A549 (cell line): ENCODE measurements at regions of chr19 and their contacts with region 1.

Region 1: GRCh38 chr19:41541990-41542584 is 33.9 kb upstream of the CEACAM21 start:
- DNase-seq: peak; percentile 69 to 73
- ATAC-seq: peak; percentile 44 to 69; a peak in 4 of 6 replicates
- H3K4me3 ChIP-seq: no peak overlapping the region
- H3K27ac ChIP-seq: no peak overlapping the region
- H3K4me1 ChIP-seq: no peaks in the 10 kb centered on the region
- CTCF ChIP-seq: peak; percentile 88
- EP300 ChIP-seq: no peak
- POLR2A ChIP-seq: no peak
- RAD21 ChIP-seq: peak; percentile 33 to 54; a peak in 4 of 5 replicates

Region 2: GRCh38 chr19:41531438-41532311 is 10.4 kb before region 1 on chr19:
- CTCF ChIA-PET with region 1: interaction called, 18 read pairs
- POLR2A ChIA-PET with region 1: no interaction called
- DNase-seq: peak; percentile 85
- ATAC-seq: peak; percentile 73 to 86
- H3K4me3 ChIP-seq: peak overlapping the region; percentile 38
- H3K27ac ChIP-seq: no peak overlapping the region
- H3K4me1 ChIP-seq: peaks cover 7% of the 10 kb centered on the region; the same call in 2 of the 3 replicates
- CTCF ChIP-seq: no peak
- EP300 ChIP-seq: no peak
- POLR2A ChIP-seq: no peak
- RAD21 ChIP-seq: no peak

Region 3: GRCh38 chr19:41578886-41579285 is 36.8 kb after region 1 on chr19:
- CTCF ChIA-PET with region 1: no interaction called
- POLR2A ChIA-PET with region 1: no interaction called
- DNase-seq: no peak
- ATAC-seq: no peak
- H3K4me3 ChIP-seq: no peak overlapping the region
- H3K27ac ChIP-seq: no peak overlapping the region
- H3K4me1 ChIP-seq: no peaks in the 10 kb centered on the region
- CTCF ChIP-seq: no peak
- EP300 ChIP-seq: no peak
- POLR2A ChIP-seq: no peak
- RAD21 ChIP-seq: no peak

Region 4: DNA sequence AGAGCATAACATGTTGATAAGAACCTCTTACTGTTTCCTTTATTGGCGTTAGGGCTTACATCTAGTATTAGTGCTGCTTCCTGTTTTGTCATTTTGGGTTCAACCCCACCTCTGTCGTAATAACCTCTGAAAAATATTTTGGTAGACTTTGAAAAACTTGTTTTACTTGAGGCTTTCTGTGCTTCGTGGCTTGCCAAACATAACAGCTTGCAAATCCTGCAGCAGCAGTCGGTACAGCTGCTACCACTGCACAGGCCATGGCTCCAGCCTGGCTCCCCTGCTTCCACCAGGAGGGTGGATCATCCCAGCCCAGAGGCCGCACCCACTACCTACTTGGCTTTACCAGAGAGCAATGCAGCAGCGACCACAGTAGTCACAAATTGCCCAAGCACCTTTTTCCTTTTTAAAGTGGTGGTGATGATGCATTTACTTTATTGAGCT is 96.6 kb after region 1 on chr19:
- CTCF ChIA-PET with region 1: no interaction called
- POLR2A ChIA-PET with region 1: no interaction called
- DNase-seq: no peak
- ATAC-seq: no peak
- H3K4me3 ChIP-seq: no peak overlapping the region
- H3K27ac ChIP-seq: no peak overlapping the region
- H3K4me1 ChIP-seq: no peaks in the 10 kb centered on the region
- CTCF ChIP-seq: no peak
- EP300 ChIP-seq: no peak
- POLR2A ChIP-seq: no peak
- RAD21 ChIP-seq: no peak

Region 5: DNA sequence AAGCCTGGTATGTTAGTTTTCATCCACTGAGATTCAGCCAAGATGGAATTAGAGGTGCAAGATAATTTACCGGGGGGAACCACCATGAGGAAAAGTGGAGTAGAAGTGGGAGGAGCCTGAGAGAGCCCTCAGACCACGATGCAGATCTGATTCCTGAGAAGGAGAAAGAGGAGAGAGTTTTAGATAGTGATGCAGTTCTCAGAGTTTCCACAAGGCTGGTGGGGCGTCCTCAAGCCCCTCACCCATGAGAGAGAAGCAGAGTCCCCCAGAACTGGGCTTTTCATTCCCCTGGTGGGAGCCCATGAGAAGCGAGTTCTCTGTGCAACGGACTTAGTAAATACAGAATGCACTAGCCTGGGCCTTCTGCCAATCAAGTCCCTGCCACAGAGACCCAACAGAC is 184.4 kb after region 1 on chr19:
- CTCF ChIA-PET with region 1: no interaction called
- POLR2A ChIA-PET with region 1: no interaction called
- DNase-seq: no peak
- ATAC-seq: peak in 1 of 2 experiments; percentile 43; a peak in 2 of 6 replicates
- H3K4me3 ChIP-seq: no peak overlapping the region
- H3K27ac ChIP-seq: no peak overlapping the region
- H3K4me1 ChIP-seq: no peaks in the 10 kb centered on the region
- CTCF ChIP-seq: no peak
- EP300 ChIP-seq: no peak
- POLR2A ChIP-seq: no peak
- RAD21 ChIP-seq: no peak